ENCODE measurements at regions of chr13 and their contacts with region 1.

Region 1: GRCh38 chr13:106567474-106568298 is at the start of gene ARGLU1:
- DNase-seq: peak; percentile 93 to 97
- H3K4me3 ChIP-seq: peak within 1 kb of the TSS; percentile 93
- H3K4me3 Mint-ChIP-seq: peak within 1 kb of the TSS; percentile 87
- H3K27ac Mint-ChIP-seq: peak within 1 kb of the TSS; percentile 95
- H3K4me1 ChIP-seq: peaks cover 41% of the 10 kb centered on the region
- H3K4me1 Mint-ChIP-seq: peaks cover 16% of the 10 kb centered on the region
- H3K27me3 ChIP-seq: no peaks in the 10 kb centered on the region
- H3K27me3 Mint-ChIP-seq: no peaks in the 10 kb centered on the region
- CTCF ChIP-seq: no peak
- total RNA-seq, gene ARGLU1: 127 and 137 TPM in 2 replicates

Region 2: GRCh38 chr13:106619688-106620555 is 52.2 kb after region 1 on chr13:
- CTCF ChIA-PET with region 1: interaction called, 8 read pairs
- POLR2A ChIA-PET with region 1: interaction called, 3 read pairs
- intact Hi-C with region 1: loop called (anchors 1 kb)
- DNase-seq: peak in 1 of 2 experiments; percentile 53
- H3K4me3 ChIP-seq: 0 out of 2 replicates have a peak overlapping the region, but pooled peaks have one; percentile 2
- H3K4me3 Mint-ChIP-seq: peak overlapping the region; percentile 6
- H3K27ac Mint-ChIP-seq: no peak overlapping the region
- H3K4me1 ChIP-seq: peaks cover 8% of the 10 kb centered on the region; the same call in 1 of the 2 replicates
- H3K4me1 Mint-ChIP-seq: no peaks in the 10 kb centered on the region
- H3K27me3 ChIP-seq: no peaks in the 10 kb centered on the region
- H3K27me3 Mint-ChIP-seq: no peaks in the 10 kb centered on the region
- CTCF ChIP-seq: peak; percentile 80 to 90

Region 3: DNA sequence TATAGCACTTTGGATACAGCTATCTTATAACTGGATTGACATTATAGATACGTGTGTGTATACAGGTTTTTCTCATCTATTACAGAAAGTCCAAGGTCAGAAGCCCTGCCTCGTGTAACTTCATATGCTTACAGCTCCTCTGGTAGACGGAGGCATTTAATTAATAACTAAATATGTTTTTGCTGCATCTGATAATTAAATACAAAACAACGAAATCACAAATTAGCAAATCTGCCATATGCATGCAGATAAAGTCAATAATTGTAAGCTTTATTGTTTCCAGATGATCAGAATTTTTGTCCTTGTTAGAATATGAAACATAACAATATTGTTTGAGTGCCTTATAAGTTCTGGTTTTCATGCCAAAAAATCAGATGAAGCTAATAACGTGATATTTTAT is 930.0 kb after region 1 on chr13:
- CTCF ChIA-PET with region 1: no interaction called
- POLR2A ChIA-PET with region 1: no interaction called
- intact Hi-C with region 1: no loop called
- DNase-seq: no peak
- H3K4me3 ChIP-seq: no peak overlapping the region
- H3K4me3 Mint-ChIP-seq: no peak overlapping the region
- H3K27ac Mint-ChIP-seq: no peak overlapping the region
- H3K4me1 ChIP-seq: no peaks in the 10 kb centered on the region
- H3K4me1 Mint-ChIP-seq: no peaks in the 10 kb centered on the region
- H3K27me3 ChIP-seq: peaks cover 2% of the 10 kb centered on the region; the same call in 1 of the 2 replicates
- H3K27me3 Mint-ChIP-seq: no peaks in the 10 kb centered on the region
- CTCF ChIP-seq: no peak